Adrenal gland (tissue), 19 donors: ENCODE measurements at regions of chrX and their contacts with region 1.

Region 1: DNA sequence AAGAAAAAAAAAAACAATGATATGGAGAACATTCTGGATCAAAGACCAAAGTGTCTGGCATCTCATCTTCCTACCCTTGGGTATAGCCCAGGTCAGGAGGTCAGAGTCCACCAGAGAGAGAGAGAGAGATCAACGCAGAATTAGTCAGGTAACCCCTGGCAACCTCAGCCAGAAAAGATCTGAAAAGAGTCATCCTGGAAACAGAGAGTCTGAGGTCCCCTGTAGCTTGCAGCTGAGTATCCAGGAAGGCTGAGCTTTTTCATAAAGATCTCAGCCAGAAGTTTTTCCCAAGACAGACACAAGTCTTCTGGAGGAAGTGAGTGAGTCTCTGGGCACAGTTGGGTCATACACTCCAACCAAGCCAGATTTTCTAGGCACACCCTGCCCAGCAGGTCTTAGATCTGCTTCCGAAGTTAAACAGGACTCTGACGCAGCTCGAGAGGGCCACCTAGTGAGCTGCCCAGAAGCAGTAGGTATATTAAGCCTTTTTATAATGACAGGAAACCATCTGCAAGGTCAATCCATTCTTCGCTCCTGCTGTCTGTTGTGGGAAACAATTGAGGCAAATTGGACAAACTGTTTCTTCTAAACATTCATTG is 35.7 kb downstream of the ACE2 start:
- DNase-seq: peak; percentile 45 to 85 (median 72)
- H3K4me3 ChIP-seq: no peak overlapping the region
- H3K27ac ChIP-seq: no peak overlapping the region
- H3K4me1 ChIP-seq: no peaks in the 10 kb centered on the region
- H3K27me3 ChIP-seq: peaks cover 22% of the 10 kb centered on the region
- CTCF ChIP-seq: peak; percentile 24 to 64 (median 56)
- POLR2A ChIP-seq: no peak

Region 2: GRCh38 chrX:15471016-15471415 is 94.1 kb before region 1 on chrX:
- intact Hi-C with region 1: loop called in 1 of 2 experiments (anchors 10 kb)
- DNase-seq: peak; percentile 64 to 81 (median 68)
- H3K4me3 ChIP-seq: no peak overlapping the region
- H3K27ac ChIP-seq: no peak overlapping the region
- H3K4me1 ChIP-seq: no peaks in the 10 kb centered on the region
- H3K27me3 ChIP-seq: peaks cover 13% of the 10 kb centered on the region
- CTCF ChIP-seq: peak; percentile 58 to 85 (median 70)
- POLR2A ChIP-seq: no peak

Region 3: GRCh38 chrX:15493118-15493962 is 71.7 kb before region 1 on chrX and contains the start of gene PIR:
- intact Hi-C with region 1: loop called in 1 of 2 experiments (anchors 10 kb)
- DNase-seq: peak; percentile 82 to 91 (median 88)
- H3K4me3 ChIP-seq: peak within 1 kb of the TSS; percentile 25 to 64 (median 38)
- H3K27ac ChIP-seq: peak within 1 kb of the TSS in 2 of 5 donors; percentile 54 to 77
- H3K4me1 ChIP-seq: no peaks in the 10 kb centered on the region
- H3K27me3 ChIP-seq: peaks cover 18% of the 10 kb centered on the region
- CTCF ChIP-seq: peak in 3 of 6 experiments; percentile 23 to 38 (median 35)
- POLR2A ChIP-seq: peak; percentile 54 to 62
- total RNA-seq, gene PIR: 14.0 to 48.6 (median 24.8) TPM

Region 4: GRCh38 chrX:15645258-15645657 is 80.2 kb after region 1 on chrX:
- intact Hi-C with region 1: loop called in 1 of 2 experiments (anchors 10 kb)
- DNase-seq: no peak
- H3K4me3 ChIP-seq: no peak overlapping the region
- H3K27ac ChIP-seq: no peak overlapping the region
- H3K4me1 ChIP-seq: no peaks in the 10 kb centered on the region
- H3K27me3 ChIP-seq: peaks cover 10% of the 10 kb centered on the region
- CTCF ChIP-seq: no peak
- POLR2A ChIP-seq: no peak